ENCODE measurements at regions of chr3 and their contacts with region 1.

Region 1: GRCh38 chr3:112293368-112294321 is at the start of gene SLC9C1:
- DNase-seq: no peak
- H3K4me3 ChIP-seq: peak within 1 kb of the TSS; percentile 19 to 64 (median 30)
- H3K27ac ChIP-seq: peak within 1 kb of the TSS in 7 of 8 donors; percentile 14 to 72 (median 61)
- H3K4me1 ChIP-seq: peaks cover 0 to 34% (median 20%) of the 10 kb centered on the region in 6 donors
- H3K27me3 ChIP-seq: no peaks in the 10 kb centered on the region
- CTCF ChIP-seq: peak in 10 of 11 experiments; percentile 28 to 70 (median 60)
- POLR2A ChIP-seq: no peak
- total RNA-seq, gene SLC9C1: 0.18 TPM in 1 of 7 donors, not detected in the others

Region 2: DNA sequence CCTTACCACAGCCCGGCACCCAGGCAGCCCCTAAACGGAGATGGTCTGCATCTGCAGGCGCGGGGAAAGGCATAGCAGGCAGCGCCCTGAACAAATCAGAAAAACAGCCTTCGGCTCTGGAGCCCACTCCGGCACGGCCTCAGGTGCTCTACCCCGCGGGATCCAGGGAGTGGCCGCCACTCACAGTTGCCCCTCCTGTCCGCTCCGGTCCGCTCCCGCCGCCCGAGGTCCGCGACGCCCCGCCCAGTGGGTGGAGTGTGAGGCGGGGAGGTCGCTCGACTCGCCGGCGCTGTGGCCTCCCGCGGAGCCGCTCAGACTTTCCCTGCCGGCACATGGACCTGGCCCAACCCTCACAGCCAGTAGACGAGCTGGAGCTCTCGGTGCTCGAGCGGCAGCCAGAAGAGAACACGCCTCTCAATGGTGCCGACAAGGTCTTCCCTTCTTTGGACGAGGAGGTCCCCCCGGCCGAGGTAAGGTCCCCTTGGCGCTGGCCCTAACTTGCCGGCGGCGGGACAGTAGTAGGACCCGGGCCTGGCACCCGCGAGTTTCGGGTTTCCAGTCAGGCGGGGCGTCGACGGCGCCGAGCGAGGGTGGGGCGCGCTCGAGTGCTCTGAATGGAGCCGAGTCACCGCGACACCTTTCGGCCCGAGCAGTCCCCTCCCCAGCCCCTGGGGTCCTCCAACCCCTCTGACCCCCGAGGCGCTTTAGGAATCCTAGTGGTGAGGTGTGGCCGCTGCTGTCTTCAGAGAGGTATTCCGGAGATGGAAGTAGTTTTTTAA is 207.4 kb before region 1 on chr3 and contains the start of gene C3orf52:
- intact Hi-C with region 1: no loop called
- DNase-seq: peak; percentile 89
- H3K4me3 ChIP-seq: peak within 1 kb of the TSS; percentile 30 to 74 (median 46)
- H3K27ac ChIP-seq: peak within 1 kb of the TSS in 3 of 8 donors; percentile 26 to 51 (median 27)
- H3K4me1 ChIP-seq: peaks cover 9 to 40% (median 32%) of the 10 kb centered on the region in 6 donors
- H3K27me3 ChIP-seq: peaks cover 0 to 49% (median 23%) of the 10 kb centered on the region in 7 donors
- CTCF ChIP-seq: peak in 3 of 11 experiments; percentile 6 to 9 (median 8)
- POLR2A ChIP-seq: no peak
- total RNA-seq, gene C3orf52: 0.74 to 3.9 (median 1.5) TPM

Region 3: DNA sequence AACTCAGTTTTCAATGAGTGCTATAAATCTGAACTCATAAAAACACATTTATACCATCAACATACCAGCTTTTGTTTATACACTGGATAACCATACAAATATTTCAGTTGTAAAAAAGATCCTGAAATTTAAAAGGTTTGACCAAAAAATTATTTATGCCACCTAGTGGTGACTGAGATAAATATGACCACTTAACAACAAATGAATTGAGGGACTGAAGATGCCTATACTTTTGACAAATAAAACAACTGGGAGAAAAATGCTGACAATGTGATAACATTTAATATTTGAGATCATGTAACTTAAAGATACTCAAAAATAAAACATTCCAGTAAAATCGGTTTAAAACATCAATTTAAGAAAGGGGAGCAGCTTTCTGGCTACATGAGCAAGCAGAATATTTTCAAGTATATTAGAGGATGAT is 237.7 kb after region 1 on chr3:
- intact Hi-C with region 1: loop called (anchors 10 kb)
- DNase-seq: no peak
- H3K4me3 ChIP-seq: no peak overlapping the region
- H3K27ac ChIP-seq: no peak overlapping the region
- H3K4me1 ChIP-seq: peaks cover 0 to 11% (median 0%) of the 10 kb centered on the region in 6 donors
- H3K27me3 ChIP-seq: no peaks in the 10 kb centered on the region
- CTCF ChIP-seq: peak in 9 of 11 experiments; percentile 24 to 65 (median 55)
- POLR2A ChIP-seq: no peak